ENCODE measurements at regions of chr1 and their contacts with region 1.

Region 1: GRCh38 chr1:1511533-1512285 is at the start of gene ATAD3A:
- DNase-seq: peak; percentile 98 to 100 (median 99)
- H3K4me3 ChIP-seq: peak within 1 kb of the TSS; percentile 72 to 99 (median 92)
- H3K27ac ChIP-seq: peak within 1 kb of the TSS; percentile 65 to 96 (median 90)
- H3K27me3 ChIP-seq: no peaks in the 10 kb centered on the region
- CTCF ChIP-seq: peak in 29 of 56 donors; percentile 13 to 49 (median 37)
- total RNA-seq, gene ATAD3A: 12.3 to 33.0 (median 20.2) TPM

Region 2: GRCh38 chr1:1406817-1407635 is 104.7 kb before region 1 on chr1 and contains the start of gene MRPL20:
- intact Hi-C with region 1: loop called (anchors 1 to 2 kb)
- DNase-seq: peak; percentile 89 to 96 (median 94)
- H3K4me3 ChIP-seq: peak within 1 kb of the TSS; percentile 50 to 100 (median 95)
- H3K27ac ChIP-seq: peak within 1 kb of the TSS in 58 of 59 donors; percentile 0 to 94 (median 83)
- H3K27me3 ChIP-seq: no peaks in the 10 kb centered on the region
- CTCF ChIP-seq: peak in 36 of 56 donors; percentile 5 to 62 (median 30)
- total RNA-seq, gene MRPL20: 56.0 to 114 (median 86.3) TPM

Region 3: DNA sequence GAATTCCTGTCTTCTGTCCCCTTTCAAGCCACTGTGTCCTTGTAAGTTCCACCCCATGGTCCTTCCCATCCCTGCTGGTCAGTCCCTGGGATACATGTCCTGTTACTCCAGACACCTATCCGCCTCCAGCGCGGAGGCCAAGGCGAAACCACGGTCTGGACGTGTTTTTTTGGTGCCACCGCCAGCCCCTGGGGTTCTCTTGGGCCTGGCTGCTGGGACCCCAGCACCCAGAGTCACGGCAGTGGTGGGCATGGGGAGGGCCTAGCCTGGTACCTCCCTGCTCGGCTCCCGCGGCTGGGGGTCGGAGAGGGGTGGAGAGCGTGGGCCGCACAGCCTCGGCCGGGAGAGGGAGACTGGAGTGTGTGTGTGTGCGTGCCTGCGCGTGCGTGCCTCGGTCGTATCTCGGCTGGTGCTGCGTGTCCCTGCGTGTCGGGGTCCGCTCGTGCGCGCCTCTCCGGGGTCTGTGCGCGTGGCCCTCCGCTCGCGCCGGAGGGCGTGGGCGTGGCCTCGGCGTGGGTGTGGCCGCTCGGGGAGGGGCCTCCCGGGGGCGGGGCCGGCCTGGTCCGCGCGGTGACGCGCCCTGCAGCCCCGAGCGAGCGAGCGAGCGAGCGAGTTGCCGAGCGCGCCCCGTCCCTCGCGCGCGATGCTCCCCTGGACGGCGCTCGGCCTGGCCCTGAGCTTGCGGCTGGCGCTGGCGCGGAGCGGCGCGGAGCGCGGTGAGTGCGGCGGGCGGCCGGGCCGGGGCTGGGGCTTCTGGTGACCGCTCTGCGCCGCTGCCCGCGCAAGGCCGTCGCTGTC is 76.4 kb before region 1 on chr1 and contains the start of gene VWA1:
- intact Hi-C with region 1: loop called in 1 of 2 experiments (anchors 2 kb)
- DNase-seq: peak in 8 of 10 donors; percentile 53 to 86 (median 72)
- H3K4me3 ChIP-seq: peak within 1 kb of the TSS; percentile 39 to 82 (median 67)
- H3K27ac ChIP-seq: peak within 1 kb of the TSS; percentile 78 to 100 (median 97)
- H3K27me3 ChIP-seq: no peaks in the 10 kb centered on the region
- CTCF ChIP-seq: peak in 1 of 56 donors; percentile 6
- total RNA-seq, gene VWA1: 27.4 to 258 (median 73.3) TPM

Region 4: DNA sequence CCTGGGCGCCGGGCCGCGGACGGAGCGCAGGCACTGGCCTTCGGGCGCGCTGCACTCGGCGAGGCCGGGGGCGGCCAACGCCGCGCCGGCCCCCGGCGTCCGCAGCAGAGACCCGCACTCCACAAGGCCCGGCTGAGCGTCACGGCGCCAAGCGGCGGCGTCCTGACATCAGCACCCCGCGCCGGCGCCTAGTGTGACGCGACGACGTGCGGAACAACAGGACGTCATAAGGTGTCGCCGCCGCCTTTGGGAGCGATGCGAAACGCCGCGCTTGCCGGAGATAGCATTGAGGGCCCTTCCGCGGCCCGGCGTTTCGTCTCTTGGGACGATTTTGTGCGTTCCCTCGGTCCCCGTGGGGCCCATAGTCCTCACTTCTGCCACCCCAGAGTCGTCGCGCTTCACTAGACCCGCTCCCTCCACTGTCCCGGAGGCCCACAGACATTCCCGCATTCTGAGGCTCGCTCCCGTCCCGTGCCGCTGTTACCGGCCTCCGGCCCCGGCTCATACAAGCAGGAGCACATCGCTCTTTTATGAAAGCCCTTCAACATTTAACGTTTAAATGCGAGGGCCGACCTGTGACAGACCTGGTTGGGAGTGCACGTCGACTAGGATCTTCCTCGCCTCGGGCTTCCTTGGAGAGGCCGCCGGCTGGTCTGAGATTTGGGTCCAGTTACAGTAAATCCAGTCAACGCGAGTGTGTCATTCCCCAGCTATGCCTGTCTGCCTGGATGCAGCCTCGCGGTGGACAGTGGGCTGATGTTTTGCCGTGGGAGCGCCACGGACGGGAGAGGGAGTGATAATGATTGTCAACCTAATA is 63.2 kb after region 1 on chr1 and contains the start of gene SSU72:
- intact Hi-C with region 1: loop called in 1 of 2 experiments (anchors 5 kb)
- DNase-seq: peak; percentile 85 to 92 (median 90)
- H3K4me3 ChIP-seq: peak within 1 kb of the TSS; percentile 74 to 100 (median 98)
- H3K27ac ChIP-seq: peak within 1 kb of the TSS; percentile 70 to 99 (median 94)
- H3K27me3 ChIP-seq: no peaks in the 10 kb centered on the region
- CTCF ChIP-seq: peak in 6 of 56 donors; percentile 16 to 27 (median 18)
- total RNA-seq, gene SSU72: 79.2 to 139 (median 114) TPM

Region 5: GRCh38 chr1:1615256-1616044 is 103.7 kb after region 1 on chr1 and contains the start of gene MIB2:
- intact Hi-C with region 1: no loop called
- DNase-seq: peak; percentile 94 to 99 (median 96)
- H3K4me3 ChIP-seq: peak within 1 kb of the TSS; percentile 69 to 100 (median 99)
- H3K27ac ChIP-seq: peak within 1 kb of the TSS; percentile 95 to 100 (median 100)
- H3K27me3 ChIP-seq: no peaks in the 10 kb centered on the region
- CTCF ChIP-seq: peak in 13 of 56 donors; percentile 9 to 36 (median 22)
- total RNA-seq, gene MIB2: 86.0 to 202 (median 127) TPM